HCT116 (cell line): ENCODE measurements at regions of chr7 and their contacts with region 1.

Region 1: DNA sequence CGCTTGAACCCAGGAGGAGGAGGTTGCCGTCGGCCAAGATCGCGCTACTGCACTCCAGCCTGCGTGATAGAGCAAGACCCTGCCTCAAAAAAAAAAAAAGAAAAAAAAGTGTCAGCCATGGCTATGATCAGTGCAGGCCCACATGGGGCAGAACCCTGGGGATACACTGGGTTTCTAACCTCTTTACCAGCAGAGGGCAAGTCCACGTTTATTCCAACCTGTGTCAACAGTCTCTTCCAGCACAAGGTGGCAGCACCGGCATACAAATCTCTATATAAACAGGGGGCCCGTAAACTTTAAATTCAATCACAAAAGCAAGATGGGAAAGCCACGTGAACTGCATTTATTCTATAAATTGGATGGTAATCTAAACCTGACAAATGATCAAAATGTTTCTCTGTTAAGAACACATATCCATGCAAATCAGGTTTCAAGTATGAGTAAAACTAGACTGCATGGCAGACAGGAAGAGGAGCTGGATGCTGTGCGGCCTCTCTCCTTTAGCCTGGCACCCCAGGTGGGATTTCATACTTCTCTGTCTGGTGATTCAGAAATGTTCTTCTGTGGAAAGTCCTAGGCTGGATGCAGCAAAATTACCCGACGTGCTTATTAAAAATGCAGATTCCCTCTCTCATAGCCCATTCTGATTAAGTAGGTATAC is 60.0 kb upstream of the STEAP1B start:
- DNase-seq: peak; percentile 71
- ATAC-seq: peak; percentile 99
- H3K4me3 ChIP-seq: no peak overlapping the region
- H3K27ac ChIP-seq: no peak overlapping the region
- H3K4me1 ChIP-seq: no peaks in the 10 kb centered on the region
- H3K27me3 ChIP-seq: no peaks in the 10 kb centered on the region
- CTCF ChIP-seq: peak; percentile 78 to 99 (median 93)
- POLR2A ChIP-seq: no peak
- RAD21 ChIP-seq: peak; percentile 90

Region 2: GRCh38 chr7:22640269-22640668 is 80.3 kb after region 1 on chr7:
- CTCF ChIA-PET with region 1: no interaction called
- POLR2A ChIA-PET with region 1: no interaction called
- RAD21 ChIA-PET with region 1: no interaction called
- intact Hi-C with region 1: no loop called
- DNase-seq: no peak
- ATAC-seq: no peak
- H3K4me3 ChIP-seq: no peak overlapping the region
- H3K27ac ChIP-seq: no peak overlapping the region
- H3K4me1 ChIP-seq: no peaks in the 10 kb centered on the region
- H3K27me3 ChIP-seq: no peaks in the 10 kb centered on the region
- CTCF ChIP-seq: no peak
- POLR2A ChIP-seq: no peak
- RAD21 ChIP-seq: no peak

Region 3: DNA sequence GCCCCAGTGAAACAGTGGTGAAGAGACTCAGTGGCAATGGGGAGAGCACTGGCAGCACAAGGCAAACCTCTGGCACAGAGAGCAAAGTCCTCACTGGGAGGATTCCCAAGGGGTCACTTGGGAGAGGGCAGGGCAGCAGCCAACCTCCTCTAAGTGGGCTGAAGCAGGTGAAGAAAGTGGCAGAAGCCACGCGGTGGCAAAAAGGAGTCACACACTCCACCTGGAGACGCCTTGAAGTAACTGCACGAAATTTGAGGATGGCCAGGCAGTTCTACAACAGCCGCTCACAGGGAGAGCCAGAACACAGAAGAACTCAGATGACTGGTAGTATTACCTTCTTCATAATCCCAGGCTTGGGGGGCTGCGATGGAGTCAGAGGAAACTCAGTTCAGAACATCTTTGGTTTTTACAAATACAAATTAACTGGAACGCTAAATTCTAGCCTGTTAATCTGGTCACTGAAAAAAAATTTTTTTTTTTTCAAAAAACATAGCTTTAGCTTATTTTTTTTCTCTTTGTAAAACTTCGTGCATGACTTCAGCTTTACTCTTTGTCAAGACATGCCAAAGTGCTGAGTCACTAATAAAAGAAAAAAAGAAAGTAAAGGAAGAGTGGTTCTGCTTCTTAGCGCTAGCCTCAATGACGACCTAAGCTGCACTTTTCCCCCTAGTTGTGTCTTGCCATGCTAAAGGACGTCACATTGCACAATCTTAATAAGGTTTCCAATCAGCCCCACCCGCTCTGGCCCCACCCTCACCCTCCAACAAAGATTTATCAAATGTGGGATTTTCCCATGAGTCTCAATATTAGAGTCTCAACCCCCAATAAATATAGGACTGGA is 166.6 kb after region 1 on chr7:
- CTCF ChIA-PET with region 1: interaction called, 195 read pairs
- POLR2A ChIA-PET with region 1: interaction called, 3 read pairs
- RAD21 ChIA-PET with region 1: interaction called, 4 to 9 read pairs
- intact Hi-C with region 1: loop called (anchors 1 kb)
- DNase-seq: peak; percentile 37
- ATAC-seq: peak; percentile 92
- H3K4me3 ChIP-seq: no peak overlapping the region
- H3K27ac ChIP-seq: no peak overlapping the region
- H3K4me1 ChIP-seq: peaks cover 0 to 12% of the 10 kb centered on the region in 2 experiments; a peak in 1 of 4 replicates
- H3K27me3 ChIP-seq: no peaks in the 10 kb centered on the region
- CTCF ChIP-seq: peak; percentile 56 to 75 (median 62)
- POLR2A ChIP-seq: no peak
- RAD21 ChIP-seq: peak; percentile 75

Region 4: DNA sequence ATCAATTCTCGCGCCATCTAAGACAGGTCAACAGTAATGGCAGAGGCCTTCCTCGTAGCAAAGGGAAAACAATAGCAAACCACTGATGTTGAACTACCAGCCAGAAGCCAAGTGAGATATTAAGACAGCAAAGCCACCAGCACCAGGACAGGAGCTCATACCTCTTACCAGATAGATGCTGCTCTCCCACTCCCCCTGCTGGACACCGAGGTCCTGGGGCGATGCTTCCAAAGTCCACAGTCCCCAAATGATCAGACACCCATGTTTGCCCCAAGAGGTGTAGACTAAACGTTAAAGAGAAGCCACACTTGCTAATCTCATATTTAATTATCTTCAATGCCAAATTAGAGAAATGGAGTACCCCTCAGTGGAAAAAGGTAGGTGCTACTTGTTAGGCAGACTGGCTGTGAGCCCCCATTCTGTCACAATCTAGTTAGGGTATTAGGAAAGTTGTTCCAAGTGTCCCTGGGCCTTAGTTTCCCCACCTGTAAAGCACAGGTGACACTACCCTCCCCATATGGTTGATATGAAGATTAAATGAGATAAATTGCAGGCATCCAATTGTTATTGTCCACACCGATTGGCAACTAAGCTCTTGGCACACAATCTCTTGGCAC is 222.8 kb after region 1 on chr7:
- CTCF ChIA-PET with region 1: interaction called, 15 read pairs
- POLR2A ChIA-PET with region 1: no interaction called
- RAD21 ChIA-PET with region 1: no interaction called
- intact Hi-C with region 1: loop called (anchors 1 kb)
- DNase-seq: peak; percentile 48
- ATAC-seq: peak; percentile 99
- H3K4me3 ChIP-seq: no peak overlapping the region
- H3K27ac ChIP-seq: no peak overlapping the region
- H3K4me1 ChIP-seq: peaks cover 0 to 9% of the 10 kb centered on the region in 2 experiments; a peak in 1 of 4 replicates
- H3K27me3 ChIP-seq: no peaks in the 10 kb centered on the region
- CTCF ChIP-seq: peak; percentile 59 to 97 (median 94); a peak in 5 of 6 replicates
- POLR2A ChIP-seq: no peak
- RAD21 ChIP-seq: peak; percentile 47

Region 5: GRCh38 chr7:22822486-22823141 is 262.7 kb after region 1 on chr7 and contains the start of gene TOMM7:
- CTCF ChIA-PET with region 1: no interaction called
- POLR2A ChIA-PET with region 1: no interaction called
- RAD21 ChIA-PET with region 1: no interaction called
- intact Hi-C with region 1: loop called (anchors 1 kb)
- DNase-seq: peak; percentile 95
- ATAC-seq: peak; percentile 89
- H3K4me3 ChIP-seq: peak within 1 kb of the TSS; percentile 61 to 90
- H3K27ac ChIP-seq: peak within 1 kb of the TSS; percentile 79
- H3K4me1 ChIP-seq: peaks cover 0 to 20% of the 10 kb centered on the region in 2 experiments; a peak in 3 of 4 replicates
- H3K27me3 ChIP-seq: no peaks in the 10 kb centered on the region
- CTCF ChIP-seq: no peak
- POLR2A ChIP-seq: peak; percentile 71
- RAD21 ChIP-seq: no peak
- total RNA-seq, gene TOMM7: 325 TPM

Region 6: DNA sequence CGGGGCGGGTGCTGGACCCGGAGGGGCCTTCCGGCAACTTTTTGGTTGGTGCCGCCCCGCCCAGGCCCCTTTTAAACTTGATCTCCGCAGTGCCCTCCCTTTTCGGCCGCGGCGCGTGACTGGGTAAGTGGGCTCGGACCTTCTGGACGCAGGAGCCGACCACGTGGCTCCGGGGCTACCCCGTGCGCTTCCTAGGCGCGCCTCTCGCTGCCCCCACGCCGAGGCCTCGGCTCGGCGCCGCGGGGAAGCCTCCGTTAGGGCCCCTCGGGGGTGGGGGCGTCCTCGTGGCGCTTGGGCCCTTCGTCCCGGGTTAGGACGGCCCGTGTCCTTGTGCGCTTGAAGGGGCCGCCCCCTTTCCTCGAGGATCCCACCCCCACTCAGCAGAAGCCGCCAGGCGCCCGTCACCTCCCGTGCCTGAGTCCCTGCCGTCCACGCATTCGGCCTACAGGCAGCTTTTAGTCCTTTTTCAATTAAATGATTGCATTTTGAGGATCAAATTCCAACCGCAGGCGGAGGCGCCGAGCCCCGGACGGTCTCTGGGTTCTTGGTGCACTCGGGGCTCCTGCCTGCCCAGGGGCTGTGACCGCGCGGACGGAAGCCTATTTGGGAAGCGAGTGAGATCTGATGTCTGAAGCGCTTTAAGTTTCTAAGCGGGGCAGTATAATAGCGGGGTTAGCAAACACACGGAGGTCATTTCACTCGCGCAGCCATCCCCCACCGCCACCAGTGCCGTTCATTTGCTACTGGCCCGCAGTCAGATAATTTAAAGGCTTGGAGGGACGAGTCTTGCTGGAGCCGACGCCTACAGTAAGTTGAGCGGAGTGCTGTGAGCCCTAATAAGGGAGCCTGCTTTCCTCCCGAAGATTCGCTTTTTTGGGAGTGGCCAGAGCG is 294.4 kb after region 1 on chr7:
- CTCF ChIA-PET with region 1: interaction called, 8 read pairs
- POLR2A ChIA-PET with region 1: interaction called, 3 read pairs
- RAD21 ChIA-PET with region 1: no interaction called
- intact Hi-C with region 1: loop called (anchors 10 kb)
- DNase-seq: peak; percentile 80
- ATAC-seq: peak; percentile 76
- H3K4me3 ChIP-seq: peak overlapping the region; percentile 62 to 89
- H3K27ac ChIP-seq: peak overlapping the region; percentile 97
- H3K4me1 ChIP-seq: peaks cover 37 to 55% of the 10 kb centered on the region in 2 experiments
- H3K27me3 ChIP-seq: no peaks in the 10 kb centered on the region
- CTCF ChIP-seq: no peak; a peak in 1 of 6 replicates
- POLR2A ChIP-seq: peak; percentile 20
- RAD21 ChIP-seq: no peak

Region 7: GRCh38 chr7:23055582-23056178 is 495.7 kb after region 1 on chr7:
- CTCF ChIA-PET with region 1: interaction called, 37 read pairs
- POLR2A ChIA-PET with region 1: no interaction called
- RAD21 ChIA-PET with region 1: interaction called in 1 of 2 experiments, 4 read pairs
- intact Hi-C with region 1: loop called (anchors 1 kb)
- DNase-seq: peak; percentile 64
- ATAC-seq: peak; percentile 96
- H3K4me3 ChIP-seq: no peak overlapping the region
- H3K27ac ChIP-seq: no peak overlapping the region
- H3K4me1 ChIP-seq: peaks cover 0 to 8% of the 10 kb centered on the region in 2 experiments; a peak in 2 of 4 replicates
- H3K27me3 ChIP-seq: no peaks in the 10 kb centered on the region
- CTCF ChIP-seq: peak; percentile 85 to 96 (median 90)
- POLR2A ChIP-seq: no peak
- RAD21 ChIP-seq: peak; percentile 95